ENCODE measurements at regions of chr6 and their contacts with region 1.

Region 1: GRCh38 chr6:55445648-55446204 is 118.5 kb downstream of the GFRAL start:
- DNase-seq: no peak

Region 2: DNA sequence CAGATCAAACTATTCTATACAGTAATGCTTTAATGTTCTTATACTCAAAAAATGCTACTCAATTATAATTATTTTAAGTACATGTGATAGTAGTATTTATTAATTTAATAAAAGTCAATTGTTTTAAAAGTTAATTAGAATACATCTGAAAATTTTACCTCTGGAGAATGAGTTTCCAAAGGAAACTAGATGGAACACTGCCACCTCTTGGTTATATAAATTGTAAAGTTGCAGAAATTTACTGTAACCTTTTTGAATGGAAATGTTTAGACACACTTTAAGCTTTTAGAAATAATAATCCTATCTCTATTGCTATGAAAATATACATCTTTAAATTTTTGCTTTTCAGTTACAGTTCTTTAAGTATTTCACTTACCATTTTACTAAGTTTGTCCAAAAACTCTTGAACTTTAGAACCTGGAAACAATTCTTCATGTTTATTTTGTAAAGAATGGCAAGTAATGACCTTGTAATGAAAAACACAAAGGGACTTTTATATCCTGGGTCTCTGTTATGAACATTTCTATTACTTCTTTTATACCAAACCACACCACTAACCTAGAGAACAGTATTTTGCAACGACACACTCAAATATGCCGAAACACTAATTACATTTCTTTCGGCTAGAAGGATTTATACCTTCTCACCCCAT is 440.6 kb after region 1 on chr6:
- intact Hi-C with region 1: loop called (anchors 5 kb)
- DNase-seq: no peak

Region 3: GRCh38 chr6:55953335-55953734 is 507.6 kb after region 1 on chr6:
- intact Hi-C with region 1: loop called (anchors 5 kb)
- DNase-seq: no peak

Region 4: DNA sequence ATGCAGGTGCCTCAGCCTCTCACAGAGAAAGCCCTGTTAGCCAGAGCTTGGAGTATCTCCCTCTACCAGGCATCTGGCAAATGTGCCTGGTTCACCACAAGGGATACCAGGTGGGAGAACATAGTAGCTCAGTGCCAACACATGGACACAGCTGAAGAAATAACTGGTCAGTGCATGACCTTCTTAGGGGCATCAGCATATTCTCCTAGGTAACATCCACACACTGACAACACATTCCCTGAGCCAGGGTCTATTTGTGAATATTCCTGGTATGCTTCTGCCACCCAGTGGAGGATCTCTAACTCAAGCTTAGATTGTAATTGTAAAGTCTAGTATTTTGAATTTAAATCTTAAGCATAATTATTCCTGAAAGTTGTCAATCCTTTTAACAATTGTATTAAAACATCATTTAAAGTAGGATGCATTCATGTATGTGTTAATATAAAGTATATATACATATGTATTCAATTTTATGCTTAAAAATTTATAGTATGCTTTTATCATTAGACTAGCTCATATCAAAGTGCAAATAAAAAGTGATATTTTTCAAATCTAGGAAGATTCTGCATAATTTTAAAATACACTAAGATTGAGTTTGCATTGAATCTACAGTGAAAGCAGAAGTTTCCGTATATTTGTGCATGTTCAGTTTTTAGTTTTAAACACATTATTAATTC is 846.9 kb after region 1 on chr6:
- intact Hi-C with region 1: loop called (anchors 10 kb)
- DNase-seq: no peak

Measured in cardiac septum (tissue), 1 donor.